Natural killer cell (primary cell): ENCODE measurements at regions of chr19 and their contacts with region 1.

Region 1: GRCh38 chr19:40633207-40633606 is 32.0 kb downstream of the LTBP4 start:
- DNase-seq: no peak
- ATAC-seq: no peak
- H3K4me3 ChIP-seq: no peak overlapping the region
- H3K4me3 Mint-ChIP-seq: no peak overlapping the region
- H3K27ac ChIP-seq: no peak overlapping the region
- H3K27ac Mint-ChIP-seq: no peak overlapping the region
- H3K4me1 ChIP-seq: peaks cover 4% of the 10 kb centered on the region
- H3K4me1 Mint-ChIP-seq: peaks cover 6 to 7% of the 10 kb centered on the region in 2 donors
- H3K27me3 ChIP-seq: no peaks in the 10 kb centered on the region
- H3K27me3 Mint-ChIP-seq: peaks cover 0 to 6% of the 10 kb centered on the region in 2 donors
- CTCF ChIP-seq: no peak

Region 2: DNA sequence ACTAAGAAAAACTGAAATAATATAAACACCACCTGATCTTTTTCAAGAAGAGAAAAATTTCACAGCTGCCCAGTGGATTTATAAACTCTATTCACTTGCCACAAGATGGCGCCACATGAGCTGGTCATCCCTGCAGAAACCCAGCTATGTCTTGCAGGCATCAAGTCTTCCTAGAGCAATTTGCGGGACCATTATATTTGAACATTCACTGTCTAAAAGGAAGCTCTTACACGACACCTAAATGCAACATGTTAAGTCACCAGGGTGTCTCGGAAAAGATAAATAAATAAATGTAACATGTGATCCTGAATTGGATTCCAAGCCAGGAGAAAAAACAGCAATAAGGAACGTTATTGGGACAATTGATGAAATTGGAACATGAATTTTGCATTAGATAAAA is 327.8 kb before region 1 on chr19:
- intact Hi-C with region 1: loop called (anchors 1 kb)
- DNase-seq: peak; percentile 53 to 87
- ATAC-seq: peak; percentile 78 to 83 (median 80)
- H3K4me3 ChIP-seq: no peak overlapping the region
- H3K4me3 Mint-ChIP-seq: no peak overlapping the region
- H3K27ac ChIP-seq: no peak overlapping the region
- H3K27ac Mint-ChIP-seq: no peak overlapping the region
- H3K4me1 ChIP-seq: no peaks in the 10 kb centered on the region
- H3K4me1 Mint-ChIP-seq: peaks cover 5% of the 10 kb centered on the region in 2 donors
- H3K27me3 ChIP-seq: no peaks in the 10 kb centered on the region
- H3K27me3 Mint-ChIP-seq: no peaks in the 10 kb centered on the region
- CTCF ChIP-seq: peak; percentile 87

Region 3: GRCh38 chr19:40549007-40549708 is 84.0 kb before region 1 on chr19:
- intact Hi-C with region 1: loop called (anchors 5 kb)
- DNase-seq: peak; percentile 46 to 83
- ATAC-seq: peak; percentile 70 to 93 (median 77)
- H3K4me3 ChIP-seq: no peak overlapping the region
- H3K4me3 Mint-ChIP-seq: no peak overlapping the region
- H3K27ac ChIP-seq: no peak overlapping the region
- H3K27ac Mint-ChIP-seq: no peak overlapping the region
- H3K4me1 ChIP-seq: peaks cover 5% of the 10 kb centered on the region
- H3K4me1 Mint-ChIP-seq: peaks cover 0 to 5% of the 10 kb centered on the region in 2 donors
- H3K27me3 ChIP-seq: peaks cover 14% of the 10 kb centered on the region
- H3K27me3 Mint-ChIP-seq: peaks cover 36% of the 10 kb centered on the region in 2 donors
- CTCF ChIP-seq: no peak